Cardiac septum (tissue), 1 donor: ENCODE measurements at regions of chr12 and their contacts with region 1.

Region 1: DNA sequence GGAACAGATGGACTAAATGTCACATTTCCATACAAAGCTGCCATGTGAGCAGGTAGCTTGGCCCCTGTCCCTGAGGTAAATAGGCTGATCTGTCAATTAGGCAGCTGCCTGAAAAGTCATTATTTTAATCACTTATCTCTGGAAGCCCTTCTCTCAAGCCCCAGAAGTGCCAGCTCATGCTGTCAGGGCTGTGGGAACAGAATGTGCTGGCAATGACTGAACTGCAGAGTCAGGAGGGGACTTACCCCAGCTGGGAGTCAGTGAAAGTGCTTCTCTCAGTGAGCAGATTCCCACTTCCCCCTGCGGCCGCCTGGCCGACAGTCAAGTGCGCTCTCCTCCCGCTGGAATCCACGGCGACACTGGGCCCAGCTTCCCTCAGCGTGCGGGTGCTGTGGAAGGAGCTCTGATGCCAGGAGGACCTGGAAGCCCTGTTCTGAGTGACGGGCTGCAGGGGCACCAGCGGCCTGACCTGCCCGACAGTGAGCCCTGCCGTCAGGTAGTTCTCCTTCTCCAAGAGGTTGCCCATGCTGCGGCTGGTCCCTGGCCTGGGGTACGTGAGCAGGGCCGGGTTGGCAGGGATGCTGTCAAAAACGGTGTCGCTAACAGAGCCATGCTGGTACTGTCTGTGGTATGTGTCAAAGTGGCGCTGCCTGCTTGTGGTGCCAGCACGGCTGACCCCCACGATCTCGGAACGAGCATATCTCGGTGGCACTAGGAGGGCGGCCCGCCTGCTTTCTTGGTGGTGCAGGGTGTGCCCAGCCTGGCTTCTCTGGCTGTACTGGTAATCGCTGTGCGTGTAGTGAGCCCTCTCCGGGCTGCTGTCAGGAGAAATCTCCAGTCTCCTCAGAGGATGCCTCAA is 18.7 kb downstream of the PKP2 start:
- DNase-seq: peak; percentile 89

Region 2: GRCh38 chr12:32698285-32698684 is 179.5 kb before region 1 on chr12:
- intact Hi-C with region 1: no loop called
- DNase-seq: no peak

Region 3: DNA sequence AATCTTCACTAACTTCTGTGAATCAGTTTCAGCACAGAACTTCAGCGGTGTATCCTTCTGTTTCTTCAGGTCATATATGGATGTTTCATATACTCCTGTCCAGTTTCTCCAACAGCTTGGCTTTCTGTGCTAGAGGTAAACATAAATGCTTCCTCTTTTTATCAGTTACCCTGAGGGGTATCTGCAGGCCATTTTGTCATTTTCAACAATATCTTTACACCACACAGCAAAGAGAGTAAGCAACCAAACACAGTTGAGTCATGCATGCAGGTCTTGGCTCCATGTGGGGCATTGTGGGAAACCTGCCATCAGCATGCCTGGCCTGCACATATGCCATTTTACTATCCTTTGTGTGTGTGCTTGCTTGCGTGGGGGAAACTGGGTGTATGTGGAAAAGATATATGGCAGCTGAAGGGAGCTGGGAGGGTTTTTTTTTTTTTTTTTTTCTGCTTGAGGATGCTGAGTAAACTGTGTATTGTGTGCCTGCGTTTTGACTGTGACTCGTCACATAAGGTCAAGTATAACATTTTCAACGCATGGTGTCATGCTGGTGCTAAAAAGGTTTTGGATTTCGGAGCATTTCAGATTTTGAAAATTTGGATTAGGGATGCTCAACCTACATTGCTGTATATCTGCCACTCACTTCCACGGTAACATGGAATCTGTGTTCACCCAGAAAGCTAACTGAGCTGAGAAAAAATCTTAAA is 66.0 kb before region 1 on chr12:
- intact Hi-C with region 1: no loop called
- DNase-seq: no peak

Region 4: DNA sequence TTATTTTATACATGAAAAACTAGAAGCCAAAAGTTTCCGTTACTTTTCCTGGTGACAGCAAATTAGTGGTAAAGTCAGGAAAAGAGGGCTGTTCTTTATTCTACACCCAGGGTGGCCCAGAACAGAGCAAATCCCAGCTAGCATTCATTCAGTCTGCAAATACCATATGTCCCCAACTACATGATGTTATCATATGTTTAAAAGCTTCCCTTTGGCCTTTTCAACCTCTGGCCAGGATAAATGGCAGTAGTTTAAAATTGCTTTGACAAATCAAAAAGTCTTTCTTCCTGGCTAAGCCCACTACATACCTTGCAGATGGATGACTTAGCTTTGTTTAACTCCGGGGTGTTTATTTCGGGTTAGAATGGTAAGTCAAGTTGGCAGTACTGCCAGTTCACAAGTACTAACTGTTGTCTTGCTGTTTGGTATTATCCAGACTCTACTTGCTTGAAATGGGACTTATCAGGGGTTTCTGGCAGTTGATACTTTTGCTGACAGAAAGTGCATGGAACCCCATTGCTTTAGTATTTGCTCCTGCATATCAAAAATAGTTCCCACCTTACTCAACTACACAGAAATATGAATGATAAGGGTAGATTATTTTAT is 50.9 kb before region 1 on chr12:
- intact Hi-C with region 1: loop called (anchors 1 kb)
- DNase-seq: no peak

Region 5: GRCh38 chr12:32843528-32844095 is 34.2 kb before region 1 on chr12:
- intact Hi-C with region 1: no loop called
- DNase-seq: no peak

Region 6: DNA sequence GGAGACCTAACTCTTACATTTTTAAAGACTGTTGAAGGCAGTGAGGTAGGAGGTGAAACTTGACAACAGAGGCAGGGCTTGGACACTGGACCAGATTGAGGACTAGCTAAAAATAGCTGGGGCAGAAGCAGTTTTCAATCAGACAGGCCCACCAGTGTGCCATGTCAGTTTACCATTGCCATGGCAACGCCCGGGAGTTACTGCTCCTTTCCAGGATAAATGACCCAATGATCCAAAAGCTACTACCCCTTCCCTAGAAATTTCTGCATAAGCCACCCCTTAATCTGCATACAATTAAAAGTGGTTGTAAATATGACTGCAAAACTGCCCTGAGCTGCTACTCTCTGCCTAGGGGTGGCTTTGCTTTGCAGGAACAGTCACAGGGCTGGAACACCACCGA is 72.0 kb after region 1 on chr12:
- intact Hi-C with region 1: no loop called
- DNase-seq: no peak